ENCODE measurements at regions of chr19 and their contacts with region 1.

Region 1: DNA sequence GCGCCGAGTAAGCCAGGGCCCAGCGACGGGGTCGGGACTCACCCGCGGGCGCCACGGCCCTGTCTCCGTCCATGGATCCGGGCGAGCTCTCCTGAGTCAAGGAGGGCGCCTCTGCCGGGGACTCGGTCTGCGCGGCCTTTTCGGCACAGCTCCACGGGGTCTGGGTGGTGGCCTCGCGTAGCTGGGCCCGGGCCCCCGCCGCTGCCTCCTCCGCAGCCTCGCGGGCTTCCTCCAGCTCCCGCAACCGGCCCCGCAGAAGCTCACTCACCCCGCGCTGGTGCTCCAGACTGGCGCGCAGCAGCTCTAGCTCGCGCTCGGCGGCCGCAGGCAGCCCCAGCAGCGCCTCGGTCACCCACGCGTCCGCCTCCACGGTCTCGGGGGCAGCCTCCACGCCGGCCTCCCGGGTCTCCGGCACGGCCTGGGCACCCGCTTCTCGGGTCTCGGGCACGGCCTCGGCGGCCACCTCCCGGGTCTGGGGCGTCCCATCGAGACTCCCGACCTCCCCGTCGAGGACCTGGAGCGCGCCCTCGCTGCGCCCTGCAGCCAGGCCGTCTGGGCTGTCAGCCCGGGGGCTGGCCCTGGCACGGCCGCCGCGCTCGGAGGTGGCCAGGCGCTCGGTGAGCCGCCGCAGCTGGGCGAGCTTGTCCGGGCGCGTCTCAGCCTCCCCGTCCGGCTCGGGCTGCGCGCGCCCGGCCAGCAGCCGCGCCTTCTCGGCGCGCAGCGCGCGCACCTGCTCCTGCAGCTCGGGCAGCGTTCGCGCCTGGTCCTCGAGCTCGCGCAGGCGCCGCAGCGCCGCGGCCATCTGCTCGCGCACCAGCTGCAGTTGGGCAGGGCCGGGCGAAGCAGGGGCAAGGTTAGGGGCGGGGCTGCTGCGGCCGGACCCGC is 8.4 kb downstream of the KANK3 start:
- DNase-seq: peak in 1 of 10 donors; percentile 55
- ATAC-seq: peak; percentile 41 to 49
- H3K4me3 Mint-ChIP-seq: peak overlapping the region in 3 of 10 donors; percentile 27 to 56 (median 29)
- H3K27ac Mint-ChIP-seq: no peak overlapping the region
- H3K4me1 Mint-ChIP-seq: peaks cover 0 to 10% (median 5%) of the 10 kb centered on the region in 4 donors
- H3K27me3 Mint-ChIP-seq: peaks cover 9 to 34% (median 19%) of the 10 kb centered on the region in 5 donors

Region 2: DNA sequence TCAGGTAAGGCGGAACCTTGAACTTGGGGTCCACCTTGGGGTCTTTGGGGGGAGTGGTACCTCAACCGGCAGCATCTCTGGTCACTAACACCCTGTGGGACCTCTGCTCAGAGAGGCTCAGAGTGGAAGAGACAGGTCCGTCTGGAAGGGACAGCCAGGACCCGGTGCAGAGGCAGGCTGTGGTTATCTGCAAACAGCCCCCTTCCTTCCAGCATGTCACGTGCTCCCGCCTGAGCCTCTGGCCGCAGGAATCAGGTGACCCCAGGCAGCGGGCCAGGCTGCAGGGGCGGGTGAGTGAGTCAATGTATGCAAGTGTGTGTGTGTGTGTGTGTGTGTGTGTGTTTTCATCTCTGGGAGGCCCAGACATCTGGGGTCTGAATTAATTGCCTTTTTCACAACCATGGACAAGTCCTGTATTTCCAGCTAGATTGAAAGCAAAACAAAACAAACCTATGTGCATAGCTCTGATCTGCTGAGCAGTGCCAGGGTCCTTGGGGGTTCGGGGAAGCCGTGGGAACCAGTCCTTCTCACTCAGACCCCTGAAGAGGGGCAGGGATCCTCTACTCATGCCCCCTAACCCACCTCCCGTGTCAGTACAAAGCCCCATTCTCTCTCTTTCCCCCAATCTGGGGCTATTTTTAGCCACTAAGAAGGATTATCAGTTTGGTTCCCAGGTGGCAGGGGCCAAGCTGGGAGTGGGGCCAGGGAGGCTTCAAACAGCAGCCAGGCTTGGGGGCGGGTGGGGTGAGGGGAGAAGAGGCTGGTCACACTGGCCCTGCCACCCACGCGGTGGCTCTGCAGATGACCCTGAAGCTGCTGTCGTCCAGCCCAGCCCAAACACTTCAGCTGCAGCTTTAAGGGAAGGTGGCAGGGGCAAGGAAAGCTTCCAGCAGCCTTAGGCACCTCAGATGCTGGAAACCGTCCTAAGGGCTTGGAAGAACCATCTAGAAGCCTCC is 94.1 kb before region 1 on chr19:
- POLR2A ChIA-PET with region 1: no interaction called
- DNase-seq: peak in 9 of 10 donors; percentile 12 to 77 (median 25)
- ATAC-seq: peak; percentile 58 to 65
- H3K4me3 Mint-ChIP-seq: peak overlapping the region in 9 of 10 donors; percentile 4 to 73 (median 55)
- H3K27ac Mint-ChIP-seq: peak overlapping the region; percentile 12 to 93 (median 76)
- H3K4me1 Mint-ChIP-seq: peaks cover 10 to 33% (median 22%) of the 10 kb centered on the region in 4 donors
- H3K27me3 Mint-ChIP-seq: no peaks in the 10 kb centered on the region

Region 3: DNA sequence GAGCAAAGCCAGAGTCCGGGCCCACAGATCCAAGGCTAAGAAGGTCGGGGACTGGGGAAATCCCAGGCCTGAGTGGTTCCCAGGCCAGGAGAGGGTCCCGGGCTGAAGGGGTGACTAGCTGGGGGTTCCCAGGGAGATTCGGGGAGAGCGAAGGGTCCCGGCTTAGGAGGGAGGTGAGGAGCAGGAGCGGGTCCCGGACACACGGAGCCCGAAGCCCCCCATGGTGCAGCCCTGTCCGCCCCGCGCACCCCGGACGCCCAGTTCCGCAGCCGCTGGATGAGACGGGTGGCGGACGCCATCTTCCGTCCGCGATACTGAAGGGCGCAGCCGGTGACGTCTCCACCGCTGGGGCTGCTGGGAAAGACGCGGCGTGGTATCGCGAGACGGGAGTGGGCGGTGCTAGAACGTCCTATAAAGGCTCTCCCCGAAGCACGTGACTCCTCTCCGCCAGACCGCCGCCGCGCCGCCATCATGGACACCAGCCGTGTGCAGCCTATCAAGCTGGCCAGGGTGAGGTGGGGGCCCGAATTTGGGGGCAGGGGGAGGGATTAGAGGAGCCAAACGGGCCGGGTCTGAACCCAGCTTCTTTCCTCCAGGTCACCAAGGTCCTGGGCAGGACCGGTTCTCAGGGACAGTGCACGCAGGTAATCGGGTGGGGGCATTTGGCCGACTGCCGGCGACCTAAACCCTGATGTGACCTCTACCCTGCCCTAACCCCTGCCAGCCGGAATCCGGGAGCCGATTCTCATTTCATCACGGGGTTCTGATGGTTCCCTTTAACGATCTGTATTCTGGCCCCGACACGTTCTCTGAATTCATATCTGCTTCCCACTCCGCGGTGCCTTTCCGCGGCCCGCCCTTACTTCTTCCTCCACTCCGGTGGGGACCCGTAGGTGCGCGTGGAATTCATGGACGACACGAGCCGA is 13.4 kb before region 1 on chr19 and contains the starts of genes NDUFA7 and RPS28:
- POLR2A ChIA-PET with region 1: interaction called, 12 read pairs
- DNase-seq: peak; percentile 93 to 98 (median 96)
- ATAC-seq: peak; percentile 91 to 94
- H3K4me3 Mint-ChIP-seq: peak within 1 kb of the TSS; percentile 94 to 100 (median 97)
- H3K27ac Mint-ChIP-seq: peak within 1 kb of the TSS; percentile 92 to 100 (median 98)
- H3K4me1 Mint-ChIP-seq: peaks cover 12 to 55% (median 38%) of the 10 kb centered on the region in 4 donors
- H3K27me3 Mint-ChIP-seq: no peaks in the 10 kb centered on the region
- polyA plus RNA-seq, gene NDUFA7: 117 to 136 (median 135) TPM
- polyA plus RNA-seq, gene RPS28: 3,764 to 4,165 (median 4,042) TPM

Region 4: DNA sequence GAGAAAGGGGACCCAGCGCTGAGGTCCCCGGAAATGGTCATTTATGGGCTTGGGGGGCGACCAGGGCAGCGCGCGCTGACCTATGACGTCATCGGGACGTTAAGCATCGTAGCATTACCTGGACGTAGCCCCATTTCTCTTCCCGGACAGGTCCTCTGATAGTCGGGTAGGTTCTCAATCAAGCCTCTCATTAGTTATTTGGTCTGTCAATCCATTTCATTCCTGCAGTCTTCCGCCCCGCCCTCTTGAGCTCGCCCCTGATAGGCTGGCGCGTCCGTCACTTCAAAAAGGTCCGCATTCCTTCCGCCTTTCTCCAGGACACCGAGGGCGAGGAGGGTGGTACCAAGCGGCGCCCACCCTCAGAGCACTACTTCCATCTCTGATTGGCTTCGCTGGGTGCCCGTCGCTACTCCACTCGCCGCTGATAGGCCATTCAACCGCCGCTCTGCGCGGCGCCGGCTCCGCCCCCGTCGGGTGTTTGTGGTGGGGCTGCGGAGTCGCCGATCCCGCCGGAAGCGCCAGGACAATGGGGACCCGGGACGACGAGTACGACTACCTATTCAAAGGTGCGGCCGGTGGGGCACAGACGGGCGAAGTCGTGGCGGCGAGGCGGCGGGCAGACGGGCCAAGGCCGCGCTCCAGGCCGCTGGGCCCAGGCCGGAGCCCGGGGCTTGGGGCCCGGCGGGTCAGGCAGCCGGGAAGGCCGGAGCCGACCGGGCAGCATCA is 55.4 kb after region 1 on chr19 and contains the start of gene RAB11B:
- POLR2A ChIA-PET with region 1: no interaction called
- DNase-seq: peak; percentile 90 to 99 (median 98)
- ATAC-seq: peak; percentile 92 to 93
- H3K4me3 Mint-ChIP-seq: peak within 1 kb of the TSS; percentile 86 to 97 (median 93)
- H3K27ac Mint-ChIP-seq: peak within 1 kb of the TSS; percentile 81 to 99 (median 96)
- H3K4me1 Mint-ChIP-seq: peaks cover 9 to 48% (median 32%) of the 10 kb centered on the region in 4 donors
- H3K27me3 Mint-ChIP-seq: no peaks in the 10 kb centered on the region
- polyA plus RNA-seq, gene RAB11B: 46.9 to 73.6 (median 53.9) TPM

Region 5: GRCh38 chr19:8438236-8438635 is 103.5 kb after region 1 on chr19:
- POLR2A ChIA-PET with region 1: no interaction called
- DNase-seq: no peak
- ATAC-seq: no peak
- H3K4me3 Mint-ChIP-seq: no peak overlapping the region
- H3K27ac Mint-ChIP-seq: no peak overlapping the region
- H3K4me1 Mint-ChIP-seq: peaks cover 6 to 13% (median 11%) of the 10 kb centered on the region in 4 donors
- H3K27me3 Mint-ChIP-seq: no peaks in the 10 kb centered on the region

Measured in naive thymus-derived CD8-positive, alpha-beta T cell (primary cell).